ENCODE measurements at regions of chr10 and their contacts with region 1.

Region 1: GRCh38 chr10:31759799-31760626 is 168.6 kb downstream of the ARHGAP12 start:
- DNase-seq: peak; percentile 85 to 95
- H3K4me3 ChIP-seq: peak overlapping the region; percentile 84
- H3K27ac ChIP-seq: peak overlapping the region; percentile 75
- H3K4me1 ChIP-seq: peaks cover 7% of the 10 kb centered on the region; the same call in 1 of the 2 replicates
- H3K27me3 ChIP-seq: no peaks in the 10 kb centered on the region
- CTCF ChIP-seq: no peak

Region 2: DNA sequence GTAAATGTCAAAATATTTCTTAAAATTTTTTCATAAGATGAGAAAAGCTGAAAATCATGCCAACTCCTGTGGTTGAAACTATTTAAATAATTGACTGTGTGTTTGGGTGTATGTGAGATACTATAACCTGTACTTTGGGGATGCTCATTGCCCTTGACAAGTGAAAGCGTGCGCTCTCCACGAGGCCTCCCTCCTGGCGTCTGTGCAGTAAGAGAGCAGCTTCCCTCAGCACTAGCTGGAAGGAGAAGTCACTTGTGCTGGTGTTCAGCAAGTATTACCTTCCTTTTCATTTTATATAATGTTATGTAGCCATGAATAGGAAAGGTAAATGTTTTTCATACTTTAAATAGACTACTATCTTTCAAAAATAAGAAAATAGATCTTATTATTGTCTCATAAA is 322.1 kb before region 1 on chr10:
- CTCF ChIA-PET with region 1: no interaction called
- POLR2A ChIA-PET with region 1: no interaction called
- intact Hi-C with region 1: no loop called
- DNase-seq: no peak
- H3K4me3 ChIP-seq: no peak overlapping the region
- H3K27ac ChIP-seq: no peak overlapping the region
- H3K4me1 ChIP-seq: no peaks in the 10 kb centered on the region
- H3K27me3 ChIP-seq: no peaks in the 10 kb centered on the region
- CTCF ChIP-seq: no peak

Region 3: DNA sequence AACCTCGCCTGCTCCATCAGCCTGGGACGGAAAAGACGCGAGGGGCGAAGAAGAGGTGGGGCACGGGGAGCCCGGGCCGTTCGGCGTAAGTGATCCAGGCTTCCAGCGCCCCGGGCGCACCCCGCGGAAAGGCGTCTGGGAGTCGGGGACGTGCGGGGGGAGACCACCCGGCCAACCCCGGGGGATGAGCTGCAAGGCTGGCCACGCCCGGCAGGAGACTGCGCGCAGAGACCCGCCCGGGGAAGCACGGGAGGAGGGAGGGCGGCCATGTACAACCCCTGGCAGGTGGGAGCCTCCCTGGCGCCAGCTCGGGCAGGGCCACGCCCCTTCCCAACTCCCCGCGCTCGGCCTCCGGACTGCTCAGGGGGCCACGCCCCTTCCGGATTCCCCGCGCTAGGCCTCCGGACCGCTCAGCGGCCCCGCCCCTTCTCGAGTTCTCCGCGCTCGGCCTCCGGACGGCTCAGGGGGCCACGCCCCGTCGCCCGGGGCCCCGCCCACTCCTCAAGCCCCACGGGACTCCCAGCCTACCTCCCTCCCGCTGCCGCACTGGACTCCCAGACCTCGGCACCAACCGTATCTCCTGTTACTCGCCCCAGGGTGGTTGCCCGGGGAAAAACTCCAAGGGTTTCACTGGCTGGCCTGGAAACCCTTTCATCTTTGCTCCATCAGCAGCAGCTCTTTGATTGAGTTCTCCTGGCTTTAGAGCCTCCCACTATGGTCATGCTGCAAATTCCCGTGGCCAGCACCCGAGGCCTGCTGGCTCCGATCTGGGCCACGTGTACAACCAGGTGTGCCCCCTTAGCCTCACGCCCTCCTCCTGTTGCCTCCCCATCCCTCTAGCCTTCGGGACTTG is 156.6 kb before region 1 on chr10:
- CTCF ChIA-PET with region 1: no interaction called
- POLR2A ChIA-PET with region 1: no interaction called
- intact Hi-C with region 1: loop called (anchors 10 kb)
- DNase-seq: peak; percentile 77 to 97
- H3K4me3 ChIP-seq: peak overlapping the region; percentile 66
- H3K27ac ChIP-seq: no peak overlapping the region
- H3K4me1 ChIP-seq: no peaks in the 10 kb centered on the region
- H3K27me3 ChIP-seq: no peaks in the 10 kb centered on the region
- CTCF ChIP-seq: no peak

Region 4: GRCh38 chr10:31855033-31855432 is 95.0 kb after region 1 on chr10:
- CTCF ChIA-PET with region 1: no interaction called
- POLR2A ChIA-PET with region 1: no interaction called
- intact Hi-C with region 1: no loop called
- DNase-seq: no peak
- H3K4me3 ChIP-seq: no peak overlapping the region
- H3K27ac ChIP-seq: no peak overlapping the region
- H3K4me1 ChIP-seq: no peaks in the 10 kb centered on the region
- H3K27me3 ChIP-seq: no peaks in the 10 kb centered on the region
- CTCF ChIP-seq: no peak